ENCODE measurements at regions of chr2 and their contacts with region 1.

Region 1: DNA sequence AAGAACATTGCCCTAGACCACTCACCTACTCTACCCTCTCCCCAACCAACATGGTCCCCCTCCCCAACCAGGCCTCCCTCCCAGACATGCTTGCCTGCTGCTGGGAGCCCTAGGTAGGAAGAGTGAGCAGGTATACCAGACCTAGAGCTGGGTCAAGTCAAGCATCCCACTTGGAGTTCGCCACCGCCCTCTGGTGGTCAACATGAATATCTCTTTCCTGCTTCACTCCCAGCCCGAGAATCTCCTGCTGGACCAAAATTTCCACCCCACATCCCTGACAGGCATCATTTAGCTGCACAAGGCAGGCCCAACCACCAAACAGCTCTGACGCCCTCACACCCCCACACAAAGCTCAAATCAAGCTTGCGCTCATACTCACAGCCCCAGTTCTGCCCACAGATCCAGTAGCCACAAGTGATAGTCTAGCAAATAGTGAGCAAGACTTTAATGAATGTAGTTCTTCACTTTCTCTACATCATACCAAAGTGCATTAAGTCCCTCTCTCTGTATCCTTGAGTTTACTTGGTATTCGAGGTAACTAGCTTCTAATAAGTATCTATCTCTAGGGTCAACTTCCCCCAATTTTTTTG is 116.0 kb downstream of the TNS1 start:
- DNase-seq: peak; percentile 68
- H3K4me3 ChIP-seq: no peak overlapping the region; a peak in 1 of 4 replicates
- H3K27ac ChIP-seq: peak overlapping the region; percentile 30 to 41; a peak in 3 of 4 replicates
- H3K4me1 ChIP-seq: peaks cover 0 to 28% of the 10 kb centered on the region in 2 experiments; a peak in 1 of 4 replicates
- H3K27me3 ChIP-seq: no peaks in the 10 kb centered on the region
- CTCF ChIP-seq: peak; percentile 80
- EP300 ChIP-seq: no peak
- RAD21 ChIP-seq: peak; percentile 74

Region 2: GRCh38 chr2:217798743-217799562 is 87.9 kb before region 1 on chr2:
- CTCF ChIA-PET with region 1: interaction called, 360 read pairs
- POLR2A ChIA-PET with region 1: no interaction called
- DNase-seq: no peak
- H3K4me3 ChIP-seq: no peak overlapping the region
- H3K27ac ChIP-seq: no peak overlapping the region
- H3K4me1 ChIP-seq: peaks cover 0 to 18% of the 10 kb centered on the region in 2 experiments; a peak in 1 of 4 replicates
- H3K27me3 ChIP-seq: no peaks in the 10 kb centered on the region
- CTCF ChIP-seq: no peak
- EP300 ChIP-seq: no peak
- RAD21 ChIP-seq: no peak

Region 3: GRCh38 chr2:217858519-217859491 is 28.0 kb before region 1 on chr2:
- CTCF ChIA-PET with region 1: interaction called, 21 read pairs
- POLR2A ChIA-PET with region 1: no interaction called
- DNase-seq: peak; percentile 89
- H3K4me3 ChIP-seq: no peak overlapping the region
- H3K27ac ChIP-seq: peak overlapping the region; percentile 43 to 68
- H3K4me1 ChIP-seq: peaks cover 7 to 25% of the 10 kb centered on the region in 2 experiments; a peak in 2 of 4 replicates
- H3K27me3 ChIP-seq: no peaks in the 10 kb centered on the region
- CTCF ChIP-seq: no peak
- EP300 ChIP-seq: peak in 1 of 2 experiments; percentile 43; a peak in 1 of 4 replicates
- RAD21 ChIP-seq: peak; percentile 34

Region 4: GRCh38 chr2:217899231-217900009 is 12.6 kb after region 1 on chr2:
- CTCF ChIA-PET with region 1: interaction called, 49 read pairs
- POLR2A ChIA-PET with region 1: interaction called, 4 read pairs
- DNase-seq: peak; percentile 76
- H3K4me3 ChIP-seq: no peak overlapping the region; a peak in 1 of 4 replicates
- H3K27ac ChIP-seq: peak overlapping the region in 1 of 2 experiments; percentile 52; a peak in 3 of 4 replicates
- H3K4me1 ChIP-seq: peaks cover 12 to 45% of the 10 kb centered on the region in 2 experiments; a peak in 2 of 4 replicates
- H3K27me3 ChIP-seq: no peaks in the 10 kb centered on the region
- CTCF ChIP-seq: peak; percentile 87
- EP300 ChIP-seq: no peak
- RAD21 ChIP-seq: peak; percentile 47

Region 5: DNA sequence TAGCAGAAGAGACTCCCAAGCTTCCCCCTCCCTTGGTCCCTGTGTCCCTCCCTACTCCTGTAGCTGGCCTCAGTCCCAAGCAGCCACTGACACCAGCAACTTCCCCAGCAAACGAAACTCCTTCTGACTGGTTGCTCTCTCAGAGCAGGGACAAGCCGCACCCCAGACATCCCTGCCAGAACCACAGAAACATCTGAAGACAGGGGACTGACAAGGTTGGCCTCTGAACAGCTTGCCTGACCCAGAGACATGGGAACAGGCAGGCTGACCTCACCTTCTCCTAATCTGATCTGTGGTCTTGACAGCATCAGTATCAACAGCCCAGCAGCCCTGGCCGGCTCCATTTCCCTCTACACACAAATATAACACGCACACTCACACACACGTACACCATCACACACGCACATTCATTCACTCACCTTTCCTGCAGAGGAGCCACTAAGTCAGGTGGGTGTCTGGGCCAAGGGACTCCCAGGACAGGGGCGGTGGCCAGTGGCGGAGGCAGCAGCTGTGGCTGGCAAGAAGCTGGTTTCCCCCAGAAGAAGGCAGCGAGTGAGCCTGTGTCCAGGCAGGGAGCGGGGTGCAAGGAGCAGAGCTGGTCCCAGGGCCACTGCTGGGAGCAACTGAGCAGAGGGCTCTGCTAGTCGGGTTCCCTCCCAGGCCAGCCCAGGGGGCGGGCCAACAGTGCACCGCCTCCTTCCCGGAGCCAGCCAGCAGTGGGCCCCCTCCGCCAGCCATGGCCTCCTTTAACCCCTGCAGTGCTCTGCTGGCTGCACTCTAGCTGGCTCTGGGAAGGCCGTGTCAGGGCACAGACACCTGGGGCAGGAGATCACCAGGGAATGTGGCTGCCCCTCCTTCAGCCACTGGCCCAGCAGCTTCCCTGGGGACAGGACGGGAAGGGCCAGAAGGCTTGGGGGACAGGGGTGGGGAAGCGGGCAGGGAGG is 56.9 kb after region 1 on chr2:
- CTCF ChIA-PET with region 1: interaction called, 14 read pairs
- POLR2A ChIA-PET with region 1: interaction called, 3 read pairs
- DNase-seq: peak; percentile 96
- H3K4me3 ChIP-seq: peak overlapping the region; percentile 38 to 70
- H3K27ac ChIP-seq: peak overlapping the region; percentile 60 to 86; a peak in 3 of 4 replicates
- H3K4me1 ChIP-seq: peaks cover 7 to 94% of the 10 kb centered on the region in 2 experiments
- H3K27me3 ChIP-seq: no peaks in the 10 kb centered on the region
- CTCF ChIP-seq: peak; percentile 29
- EP300 ChIP-seq: no peak
- RAD21 ChIP-seq: peak; percentile 53

Region 6: GRCh38 chr2:217988014-217988839 is 101.4 kb after region 1 on chr2:
- CTCF ChIA-PET with region 1: interaction called, 61 read pairs
- POLR2A ChIA-PET with region 1: no interaction called
- DNase-seq: peak; percentile 83
- H3K4me3 ChIP-seq: no peak overlapping the region; a peak in 1 of 4 replicates
- H3K27ac ChIP-seq: peak overlapping the region in 1 of 2 experiments; percentile 36; a peak in 2 of 4 replicates
- H3K4me1 ChIP-seq: peaks cover 8 to 14% of the 10 kb centered on the region in 2 experiments; a peak in 3 of 4 replicates
- H3K27me3 ChIP-seq: no peaks in the 10 kb centered on the region
- CTCF ChIP-seq: peak; percentile 86
- EP300 ChIP-seq: 0 out of 4 replicates have a peak, but pooled peaks of 1 of the 2 experiments have one; percentile 6
- RAD21 ChIP-seq: peak; percentile 96

Region 7: GRCh38 chr2:218360447-218360846 is 473.6 kb after region 1 on chr2:
- CTCF ChIA-PET with region 1: no interaction called
- POLR2A ChIA-PET with region 1: no interaction called
- DNase-seq: no peak
- H3K4me3 ChIP-seq: no peak overlapping the region
- H3K27ac ChIP-seq: no peak overlapping the region
- H3K4me1 ChIP-seq: peaks cover 0 to 4% of the 10 kb centered on the region in 2 experiments; a peak in 1 of 4 replicates
- H3K27me3 ChIP-seq: no peaks in the 10 kb centered on the region
- CTCF ChIP-seq: no peak
- EP300 ChIP-seq: no peak
- RAD21 ChIP-seq: no peak

Region 8: DNA sequence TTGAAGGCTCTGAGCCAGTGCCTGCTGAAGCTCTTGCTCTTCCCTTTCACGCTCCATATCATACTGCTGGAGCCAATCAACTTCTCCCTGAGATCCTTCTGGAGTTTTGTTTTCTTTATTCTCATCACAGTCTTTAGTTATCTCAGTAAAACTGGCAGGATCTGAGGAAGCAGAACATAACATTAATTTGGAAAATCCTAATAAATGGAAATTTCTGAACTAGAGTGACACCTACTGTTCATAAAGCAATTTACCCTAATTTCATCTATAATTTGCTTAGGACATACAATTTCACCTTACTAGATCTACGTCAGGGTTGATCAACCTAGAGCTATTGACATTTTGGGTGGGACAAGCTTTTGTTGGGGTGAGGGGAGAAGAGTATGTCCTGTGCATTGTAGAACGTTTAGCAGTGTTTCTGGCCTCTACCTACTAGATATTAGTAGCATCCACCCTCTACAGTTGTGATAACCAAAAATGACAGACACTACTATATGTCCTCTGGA is 579.3 kb after region 1 on chr2:
- CTCF ChIA-PET with region 1: no interaction called
- POLR2A ChIA-PET with region 1: no interaction called
- DNase-seq: peak; percentile 32
- H3K4me3 ChIP-seq: no peak overlapping the region
- H3K27ac ChIP-seq: no peak overlapping the region
- H3K4me1 ChIP-seq: no peaks in the 10 kb centered on the region
- H3K27me3 ChIP-seq: no peaks in the 10 kb centered on the region
- CTCF ChIP-seq: peak; percentile 68
- EP300 ChIP-seq: no peak
- RAD21 ChIP-seq: peak; percentile 56

Measured in SK-N-SH (cell line).